ENCODE measurements at regions of chr19 and their contacts with region 1.

Region 1: GRCh38 chr19:37217855-37218591 is at the start of gene ZNF383:
- DNase-seq: peak; percentile 80
- H3K4me3 Mint-ChIP-seq: peak within 1 kb of the TSS; percentile 96
- H3K27ac Mint-ChIP-seq: peak within 1 kb of the TSS; percentile 91
- H3K4me1 Mint-ChIP-seq: peaks cover 11% of the 10 kb centered on the region
- H3K27me3 Mint-ChIP-seq: no peaks in the 10 kb centered on the region
- total RNA-seq, gene ZNF383: 5.2 and 7.4 TPM in 2 replicates

Region 2: DNA sequence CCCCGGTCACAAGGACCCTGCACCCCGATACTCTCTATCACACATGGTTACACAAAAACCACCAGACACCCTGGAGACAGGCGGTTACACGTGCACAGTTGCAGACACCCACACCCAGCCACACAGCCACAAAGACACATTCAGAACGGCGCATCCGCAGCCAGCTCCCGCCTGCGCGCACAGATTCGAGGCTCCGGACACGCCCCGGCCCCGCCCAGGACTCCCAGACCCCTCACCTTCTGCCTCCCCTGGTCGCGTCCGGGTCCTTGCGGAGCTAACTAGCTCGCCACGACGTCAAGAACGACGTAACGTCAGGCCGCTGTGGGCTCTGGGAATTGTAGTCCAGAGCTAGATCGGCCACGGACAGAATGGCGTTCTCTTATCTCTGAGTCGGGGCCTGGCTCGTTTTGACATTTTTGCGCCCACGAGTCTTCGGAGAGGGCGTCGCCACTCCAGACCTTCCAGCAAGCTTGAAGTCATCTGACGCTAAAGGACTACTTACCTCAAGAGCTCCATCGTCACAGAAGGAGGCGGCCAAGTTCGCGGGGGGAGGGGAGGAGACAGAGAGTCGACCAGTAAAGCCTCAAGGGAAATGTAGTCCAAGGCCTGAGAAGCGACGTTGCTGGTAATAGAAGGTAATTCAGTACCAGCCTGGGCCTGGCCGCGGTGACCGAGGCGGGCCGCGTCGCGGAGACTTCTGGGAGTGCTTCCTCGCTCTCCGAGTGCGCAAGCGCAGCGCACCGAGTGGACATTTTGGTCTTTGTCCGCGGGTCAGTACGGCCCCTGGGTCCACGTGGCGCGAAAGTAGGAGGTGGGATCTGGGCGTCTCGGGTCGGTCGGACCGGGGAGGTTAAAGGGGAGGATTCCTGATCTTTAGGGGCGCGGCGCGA is 1003.4 kb before region 1 on chr19 and contains the starts of genes ZNF146 and ZNF565:
- intact Hi-C with region 1: loop called (anchors 10 kb)
- DNase-seq: peak; percentile 95
- H3K4me3 Mint-ChIP-seq: no peak within 1 kb of the TSS
- H3K27ac Mint-ChIP-seq: no peak within 1 kb of the TSS
- H3K4me1 Mint-ChIP-seq: peaks cover 3% of the 10 kb centered on the region
- H3K27me3 Mint-ChIP-seq: no peaks in the 10 kb centered on the region
- total RNA-seq, gene ZNF146: 82.3 and 86.4 TPM in 2 replicates
- total RNA-seq, gene ZNF565: 1.5 and 2.4 TPM in 2 replicates

Region 3: GRCh38 chr19:36665832-36666231 is 552.2 kb before region 1 on chr19:
- intact Hi-C with region 1: no loop called
- DNase-seq: no peak
- H3K4me3 Mint-ChIP-seq: peak overlapping the region; percentile 98
- H3K27ac Mint-ChIP-seq: peak overlapping the region; percentile 38
- H3K4me1 Mint-ChIP-seq: peaks cover 14% of the 10 kb centered on the region
- H3K27me3 Mint-ChIP-seq: no peaks in the 10 kb centered on the region

Region 4: GRCh38 chr19:36687214-36688056 is 530.6 kb before region 1 on chr19 and contains the start of gene ZNF567:
- intact Hi-C with region 1: loop called (anchors 10 kb)
- DNase-seq: peak; percentile 96
- H3K4me3 Mint-ChIP-seq: peak within 1 kb of the TSS; percentile 95
- H3K27ac Mint-ChIP-seq: peak within 1 kb of the TSS; percentile 83
- H3K4me1 Mint-ChIP-seq: peaks cover 17% of the 10 kb centered on the region
- H3K27me3 Mint-ChIP-seq: no peaks in the 10 kb centered on the region
- total RNA-seq, gene ZNF567: 7.6 and 7.7 TPM in 2 replicates

Region 5: GRCh38 chr19:36973021-36973843 is 244.8 kb before region 1 on chr19:
- intact Hi-C with region 1: loop called (anchors 5 kb)
- DNase-seq: peak; percentile 58
- H3K4me3 Mint-ChIP-seq: peak overlapping the region; percentile 91
- H3K27ac Mint-ChIP-seq: peak overlapping the region; percentile 80
- H3K4me1 Mint-ChIP-seq: peaks cover 9% of the 10 kb centered on the region
- H3K27me3 Mint-ChIP-seq: no peaks in the 10 kb centered on the region

Region 6: DNA sequence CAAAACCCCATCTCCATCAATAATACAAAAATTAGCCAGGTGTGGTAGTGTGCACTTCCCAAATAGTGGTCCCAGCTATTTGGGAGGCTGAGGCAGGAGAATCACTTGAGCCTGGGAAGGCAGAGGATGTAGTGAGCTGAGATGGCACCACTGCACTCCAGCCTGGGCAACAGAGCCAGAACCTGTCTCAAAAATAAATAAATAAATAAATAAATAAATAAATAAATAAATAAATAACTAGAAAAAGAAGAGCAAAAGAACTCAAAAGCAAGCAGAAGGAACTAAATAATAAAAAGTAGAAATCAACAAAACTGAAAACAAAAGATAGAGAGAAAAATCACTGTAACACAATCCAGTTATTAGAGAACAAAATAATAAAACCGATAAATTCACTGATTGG is 57.9 kb before region 1 on chr19:
- intact Hi-C with region 1: no loop called
- DNase-seq: no peak
- H3K4me3 Mint-ChIP-seq: no peak overlapping the region
- H3K27ac Mint-ChIP-seq: no peak overlapping the region
- H3K4me1 Mint-ChIP-seq: no peaks in the 10 kb centered on the region
- H3K27me3 Mint-ChIP-seq: no peaks in the 10 kb centered on the region

Region 7: GRCh38 chr19:37466798-37467607 is 249.0 kb after region 1 on chr19 and contains the start of gene ZNF569:
- intact Hi-C with region 1: loop called (anchors 5 kb)
- DNase-seq: peak; percentile 87
- H3K4me3 Mint-ChIP-seq: peak within 1 kb of the TSS; percentile 86
- H3K27ac Mint-ChIP-seq: peak within 1 kb of the TSS; percentile 89
- H3K4me1 Mint-ChIP-seq: peaks cover 19% of the 10 kb centered on the region
- H3K27me3 Mint-ChIP-seq: no peaks in the 10 kb centered on the region
- total RNA-seq, gene ZNF569: 3.5 and 3.8 TPM in 2 replicates

Region 8: GRCh38 chr19:37686341-37686740 is 468.3 kb after region 1 on chr19:
- intact Hi-C with region 1: no loop called
- DNase-seq: no peak
- H3K4me3 Mint-ChIP-seq: no peak overlapping the region
- H3K27ac Mint-ChIP-seq: no peak overlapping the region
- H3K4me1 Mint-ChIP-seq: no peaks in the 10 kb centered on the region
- H3K27me3 Mint-ChIP-seq: no peaks in the 10 kb centered on the region

Region 9: DNA sequence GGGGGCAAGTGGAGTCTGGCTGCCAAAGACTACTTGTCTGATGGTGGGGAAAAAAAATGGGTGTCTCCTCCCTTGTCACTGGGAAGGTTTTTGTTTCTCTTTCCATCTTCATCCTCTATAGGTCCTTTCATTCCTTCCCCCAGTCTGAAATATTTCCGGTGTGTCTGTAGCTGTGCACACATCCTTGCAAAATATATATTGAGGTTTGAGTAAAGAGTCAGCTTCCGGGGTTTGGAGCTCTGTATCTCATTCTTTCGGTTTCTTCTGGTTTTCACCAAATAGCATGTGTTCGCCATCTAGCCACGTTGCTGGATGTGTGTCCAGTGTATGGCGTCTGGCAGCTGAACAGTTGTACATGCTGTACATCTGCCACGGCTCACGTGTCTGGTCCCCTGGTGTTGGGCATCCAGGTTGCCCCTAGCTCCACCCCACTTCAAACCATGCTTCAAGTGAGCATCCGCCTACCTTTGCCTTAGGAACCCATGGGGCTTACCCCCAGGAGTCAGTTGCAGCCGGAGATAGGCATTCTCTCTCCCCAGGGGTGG is 831.2 kb after region 1 on chr19:
- intact Hi-C with region 1: loop called (anchors 10 kb)
- DNase-seq: peak; percentile 57
- H3K4me3 Mint-ChIP-seq: peak overlapping the region; percentile 74
- H3K27ac Mint-ChIP-seq: peak overlapping the region; percentile 96
- H3K4me1 Mint-ChIP-seq: peaks cover 31% of the 10 kb centered on the region
- H3K27me3 Mint-ChIP-seq: no peaks in the 10 kb centered on the region

Measured in activated T-helper 2 cell treated with anti-CD3 and anti-CD28 coated beads, Interferon-gamma antibody, Interleukin-2, Interleukin-4, amounts not matched to agents 10 μg/mL and 5 μg/mL and 100 μg/mL, durations not matched to agents 14 hours and 24 hours and 36 hours (primary cell).